Caco-2 (cell line): ENCODE measurements at regions of chr11 and their contacts with region 1.

Region 1: GRCh38 chr11:92397221-92397755 is 172.7 kb downstream of the FAT3 start:
- DNase-seq: no peak
- H3K4me3 ChIP-seq: no peak overlapping the region
- H3K4me3 Mint-ChIP-seq: no peak overlapping the region
- H3K27ac Mint-ChIP-seq: no peak overlapping the region
- H3K4me1 ChIP-seq: peaks cover 9% of the 10 kb centered on the region
- H3K4me1 Mint-ChIP-seq: peaks cover 16% of the 10 kb centered on the region
- H3K27me3 ChIP-seq: no peaks in the 10 kb centered on the region
- H3K27me3 Mint-ChIP-seq: no peaks in the 10 kb centered on the region
- CTCF ChIP-seq: no peak

Region 2: GRCh38 chr11:92152245-92152644 is 245.0 kb before region 1 on chr11:
- CTCF ChIA-PET with region 1: no interaction called
- POLR2A ChIA-PET with region 1: no interaction called
- intact Hi-C with region 1: loop called (anchors 1 kb)
- DNase-seq: peak; percentile 39 to 53
- H3K4me3 ChIP-seq: no peak overlapping the region
- H3K4me3 Mint-ChIP-seq: no peak overlapping the region
- H3K27ac Mint-ChIP-seq: no peak overlapping the region
- H3K4me1 ChIP-seq: no peaks in the 10 kb centered on the region; the same call in 1 of the 2 replicates
- H3K4me1 Mint-ChIP-seq: no peaks in the 10 kb centered on the region
- H3K27me3 ChIP-seq: no peaks in the 10 kb centered on the region
- H3K27me3 Mint-ChIP-seq: peaks cover 3% of the 10 kb centered on the region
- CTCF ChIP-seq: peak; percentile 27 to 34

Region 3: GRCh38 chr11:92295175-92296137 is 101.8 kb before region 1 on chr11:
- CTCF ChIA-PET with region 1: no interaction called
- POLR2A ChIA-PET with region 1: no interaction called
- intact Hi-C with region 1: no loop called
- DNase-seq: no peak
- H3K4me3 ChIP-seq: no peak overlapping the region
- H3K4me3 Mint-ChIP-seq: no peak overlapping the region
- H3K27ac Mint-ChIP-seq: no peak overlapping the region
- H3K4me1 ChIP-seq: peaks cover 10% of the 10 kb centered on the region
- H3K4me1 Mint-ChIP-seq: peaks cover 11% of the 10 kb centered on the region
- H3K27me3 ChIP-seq: no peaks in the 10 kb centered on the region
- H3K27me3 Mint-ChIP-seq: no peaks in the 10 kb centered on the region
- CTCF ChIP-seq: no peak